CD8-positive, alpha-beta T cell (primary cell): ENCODE measurements at regions of chr14 and their contacts with region 1.

Region 1: GRCh38 chr14:73613046-73613383 is 698 bp downstream of the ACOT6 start:
- DNase-seq: no peak
- ATAC-seq: no peak
- H3K4me3 ChIP-seq: peak overlapping the region; percentile 58 to 94
- H3K4me3 Mint-ChIP-seq: peak overlapping the region; percentile 86
- H3K27ac ChIP-seq: peak overlapping the region; percentile 37 to 77
- H3K27ac Mint-ChIP-seq: peak overlapping the region; percentile 82
- H3K4me1 ChIP-seq: peaks cover 3% of the 10 kb centered on the region
- H3K4me1 Mint-ChIP-seq: peaks cover 5% of the 10 kb centered on the region
- H3K27me3 ChIP-seq: no peaks in the 10 kb centered on the region
- H3K27me3 Mint-ChIP-seq: peaks cover 3% of the 10 kb centered on the region
- CTCF ChIP-seq: no peak

Region 2: DNA sequence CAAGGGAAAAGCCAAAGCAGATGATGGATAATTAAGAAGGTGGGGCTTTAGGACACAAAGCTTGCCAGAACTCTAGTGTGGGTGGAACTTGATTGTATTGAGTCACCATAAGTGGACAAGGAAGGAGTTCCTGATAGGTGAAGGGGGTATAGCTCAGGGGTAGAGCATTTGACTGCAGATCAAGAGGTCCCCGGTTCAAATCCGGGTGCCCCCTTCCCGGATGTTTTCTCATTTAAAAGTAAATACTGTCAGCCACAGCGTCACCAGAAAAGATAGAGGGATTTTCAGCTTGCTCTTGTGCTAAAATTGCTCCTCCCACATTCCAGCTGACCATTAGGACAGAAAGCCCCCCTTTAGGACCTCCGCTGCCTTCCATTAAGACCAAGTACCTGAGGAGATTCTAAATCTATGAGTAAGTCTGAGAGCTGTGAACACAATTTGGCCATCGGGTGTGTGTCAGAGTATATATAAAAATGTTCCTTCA is 650.1 kb before region 1 on chr14:
- CTCF ChIA-PET with region 1: no interaction called
- POLR2A ChIA-PET with region 1: no interaction called
- intact Hi-C with region 1: no loop called
- DNase-seq: no peak
- ATAC-seq: no peak
- H3K4me3 ChIP-seq: no peak overlapping the region
- H3K4me3 Mint-ChIP-seq: no peak overlapping the region
- H3K27ac ChIP-seq: no peak overlapping the region
- H3K27ac Mint-ChIP-seq: no peak overlapping the region
- H3K4me1 ChIP-seq: peaks cover 5% of the 10 kb centered on the region
- H3K4me1 Mint-ChIP-seq: no peaks in the 10 kb centered on the region
- H3K27me3 ChIP-seq: no peaks in the 10 kb centered on the region
- H3K27me3 Mint-ChIP-seq: no peaks in the 10 kb centered on the region
- CTCF ChIP-seq: no peak

Region 3: DNA sequence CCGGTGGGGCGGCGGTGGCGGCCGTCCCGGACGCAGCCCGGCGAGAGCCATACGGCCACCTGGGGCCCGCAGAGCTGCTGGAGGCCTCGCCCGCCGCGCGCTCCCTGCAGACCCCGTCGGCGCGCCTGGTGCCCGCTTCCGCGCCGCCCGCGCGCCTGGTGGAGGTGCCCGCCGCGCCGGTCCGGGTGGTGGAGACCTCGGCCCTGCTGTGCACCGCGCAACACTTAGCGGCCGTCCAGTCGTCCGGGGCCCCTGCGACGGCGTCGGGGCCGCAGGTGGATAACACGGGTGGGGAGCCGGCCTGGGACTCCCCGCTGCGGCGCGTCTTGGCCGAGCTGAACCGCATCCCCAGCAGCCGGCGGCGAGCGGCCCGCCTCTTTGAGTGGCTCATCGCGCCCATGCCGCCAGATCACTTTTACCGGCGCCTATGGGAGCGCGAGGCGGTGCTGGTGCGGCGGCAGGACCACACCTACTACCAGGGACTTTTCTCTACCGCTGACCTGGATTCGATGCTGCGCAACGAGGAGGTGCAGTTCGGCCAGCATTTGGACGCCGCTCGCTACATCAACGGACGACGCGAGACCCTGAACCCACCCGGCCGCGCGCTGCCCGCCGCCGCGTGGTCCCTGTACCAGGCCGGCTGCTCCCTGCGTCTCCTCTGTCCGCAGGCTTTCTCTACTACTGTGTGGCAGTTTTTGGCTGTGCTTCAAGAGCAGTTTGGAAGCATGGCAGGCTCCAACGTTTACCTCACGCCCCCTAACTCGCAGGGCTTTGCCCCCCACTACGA is 121.6 kb before region 1 on chr14:
- CTCF ChIA-PET with region 1: no interaction called
- POLR2A ChIA-PET with region 1: interaction called, 14 read pairs
- intact Hi-C with region 1: no loop called
- DNase-seq: peak in 8 of 9 experiments; percentile 31 to 86 (median 68)
- ATAC-seq: peak; percentile 72
- H3K4me3 ChIP-seq: peak overlapping the region; percentile 63 to 68
- H3K4me3 Mint-ChIP-seq: peak overlapping the region; percentile 86
- H3K27ac ChIP-seq: peak overlapping the region; percentile 66 to 78
- H3K27ac Mint-ChIP-seq: peak overlapping the region; percentile 91
- H3K4me1 ChIP-seq: peaks cover 37% of the 10 kb centered on the region
- H3K4me1 Mint-ChIP-seq: peaks cover 50% of the 10 kb centered on the region
- H3K27me3 ChIP-seq: no peaks in the 10 kb centered on the region
- H3K27me3 Mint-ChIP-seq: no peaks in the 10 kb centered on the region
- CTCF ChIP-seq: no peak

Region 4: GRCh38 chr14:73591690-73592448 is 21.1 kb before region 1 on chr14 and contains the start of gene ACOT4:
- CTCF ChIA-PET with region 1: interaction called, 4 read pairs
- POLR2A ChIA-PET with region 1: interaction called, 23 read pairs
- intact Hi-C with region 1: loop called (anchors 1 kb)
- DNase-seq: peak; percentile 25 to 85 (median 49)
- ATAC-seq: peak; percentile 87
- H3K4me3 ChIP-seq: peak within 1 kb of the TSS; percentile 80 to 87
- H3K4me3 Mint-ChIP-seq: peak within 1 kb of the TSS; percentile 78
- H3K27ac ChIP-seq: peak within 1 kb of the TSS; percentile 73 to 77
- H3K27ac Mint-ChIP-seq: peak within 1 kb of the TSS; percentile 49
- H3K4me1 ChIP-seq: peaks cover 6% of the 10 kb centered on the region
- H3K4me1 Mint-ChIP-seq: peaks cover 18% of the 10 kb centered on the region
- H3K27me3 ChIP-seq: no peaks in the 10 kb centered on the region
- H3K27me3 Mint-ChIP-seq: no peaks in the 10 kb centered on the region
- CTCF ChIP-seq: no peak
- total RNA-seq, gene ACOT4: 0.81 to 1.1 TPM

Region 5: DNA sequence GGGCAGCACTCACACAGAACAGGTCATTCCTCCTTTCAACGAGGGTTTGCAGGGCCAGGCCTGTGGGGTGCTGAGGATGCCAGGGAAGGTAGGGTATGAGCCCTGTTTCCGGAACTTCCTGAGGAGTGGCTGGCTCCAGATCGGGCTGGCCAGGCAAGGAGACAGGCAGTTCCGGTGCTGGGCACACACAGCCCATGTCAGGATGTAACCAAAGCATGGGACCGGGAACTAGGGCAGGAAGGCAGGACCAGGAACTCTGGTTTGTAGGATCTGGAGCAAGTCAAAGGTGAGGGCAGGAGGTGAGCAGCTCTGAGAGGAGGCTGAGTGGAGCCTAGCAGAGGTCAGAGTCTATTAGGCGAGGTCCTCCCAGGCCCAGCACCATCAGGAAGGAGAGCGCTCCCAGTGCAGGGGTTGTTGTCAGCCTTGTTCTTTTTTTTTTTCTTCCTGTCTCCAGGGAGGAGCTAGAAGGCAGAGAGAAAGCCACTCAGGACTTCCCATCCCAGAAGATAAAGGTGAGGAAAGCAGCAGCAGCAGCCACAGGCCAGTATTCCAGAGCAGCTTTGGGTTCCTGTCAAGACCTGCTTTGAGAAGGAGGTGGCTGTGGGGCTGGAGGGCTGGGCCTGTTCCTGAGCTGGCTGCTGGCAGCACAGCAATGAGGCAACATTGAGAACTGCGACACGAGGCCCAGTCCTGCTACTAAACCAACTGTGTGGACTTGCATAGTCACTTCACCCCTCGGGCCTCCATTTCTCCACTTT is 189.6 kb after region 1 on chr14:
- CTCF ChIA-PET with region 1: no interaction called
- POLR2A ChIA-PET with region 1: no interaction called
- intact Hi-C with region 1: no loop called
- DNase-seq: no peak
- ATAC-seq: no peak
- H3K4me3 ChIP-seq: no peak overlapping the region
- H3K4me3 Mint-ChIP-seq: no peak overlapping the region
- H3K27ac ChIP-seq: no peak overlapping the region
- H3K27ac Mint-ChIP-seq: no peak overlapping the region
- H3K4me1 ChIP-seq: no peaks in the 10 kb centered on the region
- H3K4me1 Mint-ChIP-seq: no peaks in the 10 kb centered on the region
- H3K27me3 ChIP-seq: no peaks in the 10 kb centered on the region
- H3K27me3 Mint-ChIP-seq: peaks cover 3% of the 10 kb centered on the region
- CTCF ChIP-seq: no peak